AG04450 (cell line): ENCODE measurements at regions of chr12 and their contacts with region 1.

Region 1: GRCh38 chr12:40010899-40011774 is 94.7 kb downstream of the SLC2A13 start:
- DNase-seq: peak; percentile 36
- H3K4me3 ChIP-seq: peak overlapping the region; percentile 8
- H3K27ac ChIP-seq: no peak overlapping the region
- H3K27me3 ChIP-seq: no peaks in the 10 kb centered on the region
- CTCF ChIP-seq: peak; percentile 84

Region 2: GRCh38 chr12:38282886-38283285 is 1728.3 kb before region 1 on chr12:
- CTCF ChIA-PET with region 1: no interaction called
- POLR2A ChIA-PET with region 1: no interaction called
- DNase-seq: no peak
- H3K4me3 ChIP-seq: no peak overlapping the region
- H3K27ac ChIP-seq: no peak overlapping the region
- H3K27me3 ChIP-seq: no peaks in the 10 kb centered on the region
- CTCF ChIP-seq: no peak

Region 3: GRCh38 chr12:39764944-39765560 is 246.1 kb before region 1 on chr12:
- CTCF ChIA-PET with region 1: interaction called, 12 read pairs
- POLR2A ChIA-PET with region 1: no interaction called
- DNase-seq: peak; percentile 7
- H3K4me3 ChIP-seq: no peak overlapping the region
- H3K27ac ChIP-seq: no peak overlapping the region
- H3K27me3 ChIP-seq: no peaks in the 10 kb centered on the region
- CTCF ChIP-seq: peak; percentile 75

Region 4: GRCh38 chr12:40032433-40033241 is 21.5 kb after region 1 on chr12:
- CTCF ChIA-PET with region 1: interaction called, 17 read pairs
- POLR2A ChIA-PET with region 1: no interaction called
- DNase-seq: no peak
- H3K4me3 ChIP-seq: no peak overlapping the region
- H3K27ac ChIP-seq: no peak overlapping the region
- H3K27me3 ChIP-seq: no peaks in the 10 kb centered on the region
- CTCF ChIP-seq: no peak

Region 5: DNA sequence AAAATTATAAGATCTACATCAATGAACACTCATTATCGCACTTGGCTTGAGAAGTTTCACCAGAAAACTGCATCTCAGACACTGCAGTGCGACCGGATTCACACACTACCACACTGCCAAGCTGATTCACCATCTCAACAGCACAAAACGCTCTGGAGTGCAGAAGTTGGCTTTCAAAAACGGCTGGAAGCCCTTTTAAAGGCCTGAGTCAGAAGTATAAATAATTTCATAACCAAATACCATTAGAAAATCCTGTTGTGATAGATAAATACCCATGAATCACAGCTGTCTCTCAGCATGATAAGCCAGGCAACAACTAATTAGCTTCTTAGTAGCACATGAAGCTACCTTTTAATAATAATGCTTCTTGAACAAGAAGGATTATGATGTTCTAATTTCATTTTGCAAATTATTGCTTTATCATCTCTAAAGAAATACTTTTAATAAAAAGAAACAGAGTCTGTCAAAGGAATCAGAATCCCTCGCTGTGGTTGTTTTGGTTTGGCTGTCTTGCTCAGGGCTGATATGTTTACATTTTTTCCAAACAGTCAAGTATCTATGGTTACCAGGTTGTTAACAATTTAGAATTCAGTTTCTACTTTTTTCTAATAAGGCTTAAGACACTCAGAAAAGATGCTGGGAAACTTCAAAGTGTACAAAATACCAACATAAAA is 43.6 kb after region 1 on chr12:
- CTCF ChIA-PET with region 1: interaction called, 18 read pairs
- POLR2A ChIA-PET with region 1: no interaction called
- DNase-seq: peak; percentile 15
- H3K4me3 ChIP-seq: no peak overlapping the region
- H3K27ac ChIP-seq: no peak overlapping the region
- H3K27me3 ChIP-seq: no peaks in the 10 kb centered on the region
- CTCF ChIP-seq: no peak

Region 6: GRCh38 chr12:40107098-40107802 is 96.1 kb after region 1 on chr12:
- CTCF ChIA-PET with region 1: interaction called, 102 read pairs
- POLR2A ChIA-PET with region 1: interaction called, 3 read pairs
- DNase-seq: peak; percentile 64
- H3K4me3 ChIP-seq: peak overlapping the region; percentile 34
- H3K27ac ChIP-seq: no peak overlapping the region
- H3K27me3 ChIP-seq: no peaks in the 10 kb centered on the region
- CTCF ChIP-seq: peak; percentile 96